ENCODE measurements at regions of chr7 and their contacts with region 1.

Region 1: DNA sequence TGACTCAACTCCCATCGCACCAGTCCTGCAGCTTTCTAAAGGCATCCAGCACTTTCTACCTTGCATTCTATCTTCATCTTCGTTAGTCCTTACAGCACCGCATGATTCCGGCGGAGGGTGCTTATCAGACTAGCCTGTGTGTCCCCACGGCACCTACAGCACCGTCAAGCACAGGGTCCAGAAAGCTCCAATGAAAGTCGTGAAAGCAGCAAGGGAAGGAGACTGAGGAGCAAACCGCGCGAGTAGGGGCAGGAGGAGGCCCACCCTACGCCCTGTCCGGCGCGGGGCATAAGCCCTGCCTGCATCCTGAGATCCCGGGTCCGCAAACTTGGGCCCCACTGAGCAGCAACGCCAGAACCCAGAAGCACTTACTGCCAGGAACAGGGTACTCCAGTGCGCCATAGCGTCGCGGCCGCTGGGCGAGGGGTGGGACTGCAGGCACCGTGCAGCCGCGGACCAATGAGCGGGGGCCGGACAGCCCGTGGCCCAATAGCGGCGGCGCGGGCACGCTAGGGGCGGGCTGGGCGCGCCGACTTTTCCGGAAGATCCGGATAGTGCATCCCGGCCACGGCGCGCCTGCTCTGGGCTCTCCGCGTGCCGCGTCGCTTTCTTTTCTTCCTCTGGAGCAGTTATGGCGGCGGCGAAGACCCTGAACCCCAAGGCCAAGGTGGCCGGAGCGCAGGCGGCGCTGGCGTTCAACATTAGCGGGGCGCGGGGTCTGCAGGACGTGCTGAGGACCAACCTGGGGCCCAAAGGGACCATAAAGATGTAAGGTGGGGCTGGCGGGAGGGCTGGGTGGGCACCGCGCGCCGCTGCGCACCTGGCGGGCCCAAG is 122.1 kb upstream of the VKORC1L1 start:
- DNase-seq: peak; percentile 89
- H3K4me3 Mint-ChIP-seq: peak overlapping the region; percentile 79
- H3K27ac Mint-ChIP-seq: peak overlapping the region; percentile 58
- H3K4me1 Mint-ChIP-seq: peaks cover 5% of the 10 kb centered on the region
- H3K27me3 Mint-ChIP-seq: no peaks in the 10 kb centered on the region
- CTCF ChIP-seq: no peak

Region 2: GRCh38 chr7:65820287-65820950 is 69.7 kb after region 1 on chr7:
- CTCF ChIA-PET with region 1: no interaction called
- POLR2A ChIA-PET with region 1: no interaction called
- intact Hi-C with region 1: no loop called
- DNase-seq: no peak
- H3K4me3 Mint-ChIP-seq: no peak overlapping the region
- H3K27ac Mint-ChIP-seq: no peak overlapping the region
- H3K4me1 Mint-ChIP-seq: no peaks in the 10 kb centered on the region
- H3K27me3 Mint-ChIP-seq: no peaks in the 10 kb centered on the region
- CTCF ChIP-seq: no peak

Region 3: DNA sequence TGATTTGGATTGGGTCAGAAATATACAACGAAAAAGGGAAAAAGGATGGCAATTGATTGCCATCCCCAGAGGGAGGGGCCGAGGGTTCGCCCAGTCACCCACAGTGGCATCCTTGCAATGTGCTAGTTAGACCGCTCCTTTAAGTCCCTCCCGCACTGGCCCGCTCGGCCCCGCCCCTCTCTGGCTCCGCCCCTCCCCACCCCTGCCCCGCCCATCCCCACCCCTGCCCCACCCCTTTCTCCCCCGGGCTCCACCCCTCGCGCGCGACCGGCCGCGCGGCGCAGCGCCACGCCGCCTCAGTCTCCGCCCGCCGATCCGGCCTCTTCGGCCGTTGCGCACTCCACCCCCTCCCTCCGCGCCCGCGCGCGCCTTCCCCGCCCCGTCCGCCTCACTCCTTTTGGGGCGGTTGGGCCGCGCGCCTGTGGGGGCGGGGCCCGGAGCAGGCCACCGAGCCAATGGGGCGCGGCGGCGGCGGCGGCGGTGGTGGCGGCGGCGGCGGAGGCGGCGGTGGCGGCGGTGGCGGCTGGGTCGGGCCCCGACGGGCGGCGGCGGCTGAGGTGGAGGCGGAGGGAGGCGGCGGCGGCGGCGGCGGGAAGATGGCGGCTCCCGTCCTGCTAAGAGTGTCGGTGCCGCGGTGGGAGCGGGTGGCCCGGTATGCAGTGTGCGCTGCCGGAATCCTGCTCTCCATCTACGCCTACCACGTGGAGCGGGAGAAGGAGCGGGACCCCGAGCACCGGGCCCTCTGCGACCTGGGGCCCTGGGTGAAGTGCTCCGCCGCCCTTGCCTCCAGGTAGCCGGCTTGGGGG is 122.3 kb after region 1 on chr7 and contains the start of gene VKORC1L1:
- CTCF ChIA-PET with region 1: no interaction called
- POLR2A ChIA-PET with region 1: interaction called, 3 read pairs
- intact Hi-C with region 1: loop called (anchors 10 kb)
- DNase-seq: peak; percentile 92
- H3K4me3 Mint-ChIP-seq: peak within 1 kb of the TSS; percentile 77
- H3K27ac Mint-ChIP-seq: peak within 1 kb of the TSS; percentile 79
- H3K4me1 Mint-ChIP-seq: peaks cover 5% of the 10 kb centered on the region
- H3K27me3 Mint-ChIP-seq: no peaks in the 10 kb centered on the region
- CTCF ChIP-seq: no peak
- total RNA-seq, gene VKORC1L1: 28.7 and 32.1 TPM in 2 replicates

Region 4: DNA sequence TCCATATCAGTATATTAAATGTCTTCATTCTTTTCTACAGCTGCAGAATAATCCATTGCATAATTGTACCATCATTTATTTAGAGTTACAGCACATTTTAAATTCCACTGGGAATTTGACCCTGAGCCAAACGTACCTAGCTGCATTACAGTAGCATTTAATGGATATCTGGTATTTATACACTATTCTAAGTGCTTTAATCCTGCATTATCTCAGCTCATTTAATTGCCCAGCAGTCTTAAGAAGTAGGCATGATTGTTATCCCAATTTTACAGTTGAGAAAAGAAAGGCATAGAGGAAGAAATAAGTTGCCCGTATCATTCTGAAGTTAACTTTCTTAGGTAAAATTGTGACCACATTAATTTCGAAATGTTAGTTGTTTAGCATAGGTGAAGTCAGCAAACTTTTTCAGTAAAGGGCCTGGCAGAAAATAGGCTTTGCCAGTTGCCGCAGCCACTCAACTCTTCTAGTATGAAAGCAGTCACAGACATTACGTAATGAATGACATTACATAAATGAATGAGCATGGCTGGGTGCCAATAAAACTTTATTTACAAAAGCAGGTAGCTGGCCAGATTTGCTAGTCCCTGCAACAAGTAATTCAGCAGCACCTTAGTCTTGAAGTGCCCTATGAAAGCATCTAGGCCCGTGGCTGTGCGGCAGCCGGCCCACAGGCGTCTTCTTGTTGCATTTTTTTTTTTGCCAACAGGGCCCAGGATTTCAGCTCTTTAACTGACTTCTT is 201.3 kb after region 1 on chr7:
- CTCF ChIA-PET with region 1: interaction called, 3 read pairs
- POLR2A ChIA-PET with region 1: interaction called, 10 read pairs
- intact Hi-C with region 1: no loop called
- DNase-seq: peak; percentile 82
- H3K4me3 Mint-ChIP-seq: no peak overlapping the region
- H3K27ac Mint-ChIP-seq: no peak overlapping the region
- H3K4me1 Mint-ChIP-seq: peaks cover 14% of the 10 kb centered on the region
- H3K27me3 Mint-ChIP-seq: no peaks in the 10 kb centered on the region
- CTCF ChIP-seq: no peak

Region 5: DNA sequence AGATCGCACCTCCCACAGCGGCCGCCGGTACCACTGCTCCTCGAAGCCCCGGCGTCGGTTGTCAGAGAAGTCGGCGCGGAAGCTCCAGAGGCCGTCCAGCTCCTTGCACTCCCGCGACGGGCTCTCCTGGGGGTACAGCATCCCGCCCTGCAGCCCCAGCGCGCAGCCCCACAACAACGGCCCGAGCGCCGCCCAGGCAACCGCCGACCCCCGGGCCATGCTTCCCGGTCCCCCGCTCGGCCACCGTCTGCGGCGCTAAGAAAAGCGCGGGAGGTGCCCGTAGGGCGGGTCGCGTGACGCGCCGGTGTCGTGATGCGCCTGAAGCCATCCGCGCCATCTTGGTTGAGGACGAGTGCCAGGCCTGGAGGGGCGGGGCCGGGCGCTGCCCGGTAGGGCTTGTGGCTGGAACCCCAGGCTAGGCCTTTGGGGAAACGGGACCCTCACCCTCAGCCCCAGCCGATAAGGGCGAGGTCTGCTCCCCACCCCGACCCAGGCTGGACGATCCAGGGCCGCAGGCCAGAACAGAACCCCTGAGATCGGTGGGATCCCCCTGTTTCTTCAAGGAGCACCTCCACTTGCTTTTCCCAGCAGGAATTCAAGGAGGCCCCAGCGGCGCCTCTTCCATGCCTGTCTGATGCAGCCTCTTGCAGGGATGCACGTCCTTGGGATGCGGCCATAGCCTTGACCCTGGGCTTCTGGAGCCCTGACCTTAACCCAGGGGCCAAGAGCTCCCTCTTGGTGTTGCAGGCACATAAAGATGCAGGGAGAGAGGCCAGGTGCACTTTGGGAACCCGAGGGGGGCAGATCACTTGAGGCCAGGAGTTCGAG is 231.5 kb after region 1 on chr7 and contains the start of gene GUSB:
- CTCF ChIA-PET with region 1: no interaction called
- POLR2A ChIA-PET with region 1: interaction called, 16 read pairs
- intact Hi-C with region 1: loop called (anchors 10 kb)
- DNase-seq: peak; percentile 89
- H3K4me3 Mint-ChIP-seq: peak within 1 kb of the TSS; percentile 71
- H3K27ac Mint-ChIP-seq: peak within 1 kb of the TSS; percentile 51
- H3K4me1 Mint-ChIP-seq: peaks cover 5% of the 10 kb centered on the region
- H3K27me3 Mint-ChIP-seq: no peaks in the 10 kb centered on the region
- CTCF ChIP-seq: no peak
- total RNA-seq, gene GUSB: 35.0 and 36.9 TPM in 2 replicates